Activated CD8-positive, alpha-beta T cell treated with anti-CD3 and anti-CD28 coated beads for 36 hours (primary cell): ENCODE measurements at regions of chr11 and their contacts with region 1.

Region 1: DNA sequence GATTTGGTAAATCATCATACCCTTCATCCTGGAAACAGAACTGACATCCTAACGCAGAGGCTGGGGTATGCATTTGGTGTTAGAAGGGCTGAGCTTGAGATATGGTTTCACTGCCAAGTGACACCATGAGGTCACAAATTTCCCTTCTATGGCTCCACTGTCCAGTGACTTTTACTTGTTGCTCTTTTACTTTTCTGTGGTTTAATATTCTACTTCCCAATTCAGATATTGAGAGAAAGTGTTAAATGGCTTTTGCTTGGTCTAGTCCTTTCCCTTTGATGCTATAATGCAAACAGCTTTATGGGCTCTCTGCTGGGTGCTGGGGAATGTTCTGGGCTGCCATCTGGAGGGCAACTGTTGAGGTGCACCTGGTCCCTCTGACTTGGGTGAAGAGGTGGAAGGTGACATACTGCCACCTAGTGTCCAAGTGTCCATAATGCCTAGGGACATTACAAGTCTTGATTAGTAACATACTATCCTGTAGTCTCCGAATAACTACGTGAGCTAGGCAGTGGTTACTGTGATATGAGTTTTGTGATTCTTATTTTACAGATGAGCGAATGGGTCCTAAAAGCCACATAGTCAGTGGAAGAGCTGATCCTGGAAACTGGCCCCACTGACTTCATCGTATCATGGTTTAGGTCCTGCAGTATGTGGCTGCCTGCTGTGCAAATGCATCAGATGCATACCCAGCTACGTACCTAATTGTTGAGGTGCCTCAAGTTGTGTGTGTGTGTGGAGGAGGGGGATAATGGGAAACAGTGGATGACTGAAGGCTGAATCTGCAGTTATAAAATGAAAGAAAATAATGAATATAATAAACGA is 149.1 kb upstream of the RAG2 start:
- DNase-seq: peak; percentile 94
- ATAC-seq: peak; percentile 100
- H3K4me3 Mint-ChIP-seq: no peak overlapping the region
- H3K27ac Mint-ChIP-seq: no peak overlapping the region
- H3K4me1 Mint-ChIP-seq: peaks cover 3% of the 10 kb centered on the region
- H3K27me3 Mint-ChIP-seq: peaks cover 21% of the 10 kb centered on the region
- CTCF ChIP-seq: peak; percentile 93

Region 2: GRCh38 chr11:36289226-36289852 is 457.8 kb before region 1 on chr11 and contains the start of gene COMMD9:
- CTCF ChIA-PET with region 1: interaction called, 14 read pairs
- POLR2A ChIA-PET with region 1: no interaction called
- intact Hi-C with region 1: no loop called
- DNase-seq: peak; percentile 98
- ATAC-seq: peak; percentile 99
- H3K4me3 Mint-ChIP-seq: peak within 1 kb of the TSS; percentile 82
- H3K27ac Mint-ChIP-seq: peak within 1 kb of the TSS; percentile 86
- H3K4me1 Mint-ChIP-seq: peaks cover 29% of the 10 kb centered on the region
- H3K27me3 Mint-ChIP-seq: no peaks in the 10 kb centered on the region
- CTCF ChIP-seq: no peak
- total RNA-seq, gene COMMD9: 34.8 to 36.8 TPM

Region 3: GRCh38 chr11:36564376-36565030 is 182.6 kb before region 1 on chr11:
- CTCF ChIA-PET with region 1: interaction called, 201 read pairs
- POLR2A ChIA-PET with region 1: interaction called, 3 read pairs
- intact Hi-C with region 1: loop called (anchors 1 kb)
- DNase-seq: peak; percentile 70
- ATAC-seq: peak; percentile 56
- H3K4me3 Mint-ChIP-seq: peak overlapping the region; percentile 43
- H3K27ac Mint-ChIP-seq: no peak overlapping the region
- H3K4me1 Mint-ChIP-seq: peaks cover 5% of the 10 kb centered on the region
- H3K27me3 Mint-ChIP-seq: peaks cover 27% of the 10 kb centered on the region
- CTCF ChIP-seq: peak; percentile 72

Region 4: DNA sequence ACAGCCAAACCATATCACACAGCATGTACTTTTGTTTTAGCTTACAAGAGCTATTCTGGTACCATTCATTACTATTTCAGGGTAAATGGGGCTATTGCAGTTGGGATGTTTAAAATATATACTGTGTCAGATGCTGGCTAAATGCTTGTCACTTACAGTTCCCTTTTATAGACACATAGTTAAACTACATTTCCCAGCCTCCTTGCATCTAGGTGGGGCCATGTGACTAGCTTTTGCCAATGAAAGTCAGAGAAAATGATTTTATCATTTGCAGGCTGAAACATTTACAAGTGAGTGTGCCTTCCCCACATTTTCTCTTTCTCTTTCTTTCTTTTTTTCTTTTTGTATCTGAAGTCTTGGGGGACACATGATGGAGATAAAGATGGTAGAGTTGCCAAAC is 160.6 kb before region 1 on chr11:
- CTCF ChIA-PET with region 1: interaction called, 18 read pairs
- POLR2A ChIA-PET with region 1: no interaction called
- intact Hi-C with region 1: no loop called
- DNase-seq: no peak
- ATAC-seq: peak; percentile 37
- H3K4me3 Mint-ChIP-seq: no peak overlapping the region
- H3K27ac Mint-ChIP-seq: no peak overlapping the region
- H3K4me1 Mint-ChIP-seq: no peaks in the 10 kb centered on the region
- H3K27me3 Mint-ChIP-seq: peaks cover 16% of the 10 kb centered on the region
- CTCF ChIP-seq: no peak

Region 5: GRCh38 chr11:36622431-36623136 is 124.5 kb before region 1 on chr11:
- CTCF ChIA-PET with region 1: no interaction called
- POLR2A ChIA-PET with region 1: no interaction called
- intact Hi-C with region 1: no loop called
- DNase-seq: no peak
- ATAC-seq: no peak
- H3K4me3 Mint-ChIP-seq: no peak overlapping the region
- H3K27ac Mint-ChIP-seq: no peak overlapping the region
- H3K4me1 Mint-ChIP-seq: no peaks in the 10 kb centered on the region
- H3K27me3 Mint-ChIP-seq: peaks cover 11% of the 10 kb centered on the region
- CTCF ChIP-seq: no peak

Region 6: GRCh38 chr11:36684840-36685801 is 62.0 kb before region 1 on chr11:
- CTCF ChIA-PET with region 1: interaction called, 15 read pairs
- POLR2A ChIA-PET with region 1: no interaction called
- intact Hi-C with region 1: no loop called
- DNase-seq: peak; percentile 77
- ATAC-seq: peak; percentile 87
- H3K4me3 Mint-ChIP-seq: no peak overlapping the region
- H3K27ac Mint-ChIP-seq: no peak overlapping the region
- H3K4me1 Mint-ChIP-seq: peaks cover 12% of the 10 kb centered on the region
- H3K27me3 Mint-ChIP-seq: peaks cover 52% of the 10 kb centered on the region
- CTCF ChIP-seq: no peak

Region 7: DNA sequence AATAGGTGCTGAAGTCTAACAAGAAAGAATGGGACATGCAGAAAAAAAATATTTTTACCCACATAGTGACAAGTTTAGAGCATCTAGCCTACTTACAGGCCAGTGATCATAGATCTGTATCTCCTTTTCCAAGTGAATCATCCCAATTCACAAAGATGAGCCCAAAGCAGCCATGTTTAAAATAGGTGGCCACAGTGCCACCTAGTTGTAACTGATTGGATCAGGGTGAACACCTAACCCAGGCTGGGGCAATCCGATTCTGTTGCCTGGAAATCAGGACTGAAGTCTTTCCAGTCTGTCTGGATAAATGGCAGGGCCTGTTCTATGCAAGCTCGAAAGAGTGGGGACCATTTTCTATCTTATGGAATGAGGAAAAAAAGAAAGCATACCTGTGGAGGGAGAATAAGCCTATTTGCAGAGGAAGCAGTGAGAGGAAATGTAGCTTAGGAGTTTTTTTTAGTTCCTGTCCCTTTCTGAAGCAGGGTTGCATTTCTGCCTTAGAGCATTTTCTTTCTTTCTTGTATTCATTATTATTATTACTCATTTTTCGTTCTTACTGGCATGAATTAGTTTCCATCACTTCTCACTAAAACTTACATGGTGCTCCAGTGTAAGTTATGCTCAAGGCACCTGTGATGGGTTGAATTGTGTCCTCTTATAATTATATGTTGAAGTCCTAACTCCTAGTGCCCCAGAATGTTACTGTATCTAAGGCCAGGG is 35.8 kb before region 1 on chr11:
- CTCF ChIA-PET with region 1: interaction called, 29 read pairs
- POLR2A ChIA-PET with region 1: no interaction called
- intact Hi-C with region 1: no loop called
- DNase-seq: no peak
- ATAC-seq: no peak
- H3K4me3 Mint-ChIP-seq: no peak overlapping the region
- H3K27ac Mint-ChIP-seq: no peak overlapping the region
- H3K4me1 Mint-ChIP-seq: no peaks in the 10 kb centered on the region
- H3K27me3 Mint-ChIP-seq: peaks cover 27% of the 10 kb centered on the region
- CTCF ChIP-seq: no peak